ENCODE measurements at regions of chr4 and their contacts with region 1.

Region 1: GRCh38 chr4:42282081-42282901 is 115.0 kb upstream of the SHISA3 start:
- DNase-seq: peak in 4 of 5 donors; percentile 8 to 32 (median 28)
- H3K4me3 ChIP-seq: no peak overlapping the region
- H3K4me3 Mint-ChIP-seq: peak overlapping the region in 2 of 8 donors; percentile 39 to 48
- H3K27ac ChIP-seq: no peak overlapping the region
- H3K27ac Mint-ChIP-seq: no peak overlapping the region
- H3K4me1 ChIP-seq: peaks cover 8% of the 10 kb centered on the region
- H3K4me1 Mint-ChIP-seq: peaks cover 5 to 16% (median 7%) of the 10 kb centered on the region in 4 donors
- H3K27me3 ChIP-seq: no peaks in the 10 kb centered on the region
- H3K27me3 Mint-ChIP-seq: peaks cover 0 to 5% of the 10 kb centered on the region in 2 donors

Region 2: DNA sequence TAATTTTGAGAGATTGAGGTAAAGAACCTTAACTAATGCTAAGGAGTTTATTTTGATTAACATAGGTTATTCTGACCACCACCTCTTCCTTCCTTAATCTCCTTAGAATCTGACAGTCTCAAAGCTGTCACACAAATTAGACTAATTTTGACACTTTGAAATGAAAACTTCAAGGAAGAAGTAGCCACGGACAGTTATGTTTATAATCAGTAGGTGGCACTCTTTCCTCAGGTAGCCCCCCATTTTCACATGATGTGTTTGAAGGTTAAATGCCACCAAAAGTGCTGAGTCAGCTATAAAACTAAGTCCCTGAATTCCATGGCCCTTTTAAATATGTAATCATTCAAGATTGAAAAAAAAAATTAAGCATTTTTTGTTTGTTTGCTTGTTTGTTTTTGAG is 324.7 kb before region 1 on chr4:
- CTCF ChIA-PET with region 1: no interaction called
- POLR2A ChIA-PET with region 1: no interaction called
- intact Hi-C with region 1: loop called (anchors 10 kb)
- DNase-seq: peak in 3 of 5 donors; percentile 2 to 10 (median 7)
- H3K4me3 ChIP-seq: no peak overlapping the region
- H3K4me3 Mint-ChIP-seq: no peak overlapping the region
- H3K27ac ChIP-seq: no peak overlapping the region
- H3K27ac Mint-ChIP-seq: peak overlapping the region in 1 of 7 donors; percentile 22
- H3K4me1 ChIP-seq: no peaks in the 10 kb centered on the region
- H3K4me1 Mint-ChIP-seq: no peaks in the 10 kb centered on the region
- H3K27me3 ChIP-seq: no peaks in the 10 kb centered on the region
- H3K27me3 Mint-ChIP-seq: no peaks in the 10 kb centered on the region

Region 3: GRCh38 chr4:42248984-42249383 is 33.3 kb before region 1 on chr4:
- CTCF ChIA-PET with region 1: no interaction called
- POLR2A ChIA-PET with region 1: no interaction called
- intact Hi-C with region 1: no loop called
- DNase-seq: no peak
- H3K4me3 ChIP-seq: no peak overlapping the region
- H3K4me3 Mint-ChIP-seq: no peak overlapping the region
- H3K27ac ChIP-seq: no peak overlapping the region
- H3K27ac Mint-ChIP-seq: no peak overlapping the region
- H3K4me1 ChIP-seq: no peaks in the 10 kb centered on the region
- H3K4me1 Mint-ChIP-seq: no peaks in the 10 kb centered on the region
- H3K27me3 ChIP-seq: peaks cover 4% of the 10 kb centered on the region
- H3K27me3 Mint-ChIP-seq: peaks cover 7 to 13% of the 10 kb centered on the region in 2 donors

Region 4: GRCh38 chr4:42293967-42294822 is 11.9 kb after region 1 on chr4:
- CTCF ChIA-PET with region 1: interaction called, 14 read pairs
- POLR2A ChIA-PET with region 1: no interaction called
- intact Hi-C with region 1: no loop called
- DNase-seq: no peak
- H3K4me3 ChIP-seq: no peak overlapping the region
- H3K4me3 Mint-ChIP-seq: no peak overlapping the region
- H3K27ac ChIP-seq: no peak overlapping the region
- H3K27ac Mint-ChIP-seq: no peak overlapping the region
- H3K4me1 ChIP-seq: no peaks in the 10 kb centered on the region
- H3K4me1 Mint-ChIP-seq: no peaks in the 10 kb centered on the region
- H3K27me3 ChIP-seq: no peaks in the 10 kb centered on the region
- H3K27me3 Mint-ChIP-seq: peaks cover 3 to 12% of the 10 kb centered on the region in 2 donors

Measured in CD4-positive, alpha-beta memory T cell (primary cell).